ACHN (cell line): ENCODE measurements at regions of chr7 and their contacts with region 1.

Region 1: DNA sequence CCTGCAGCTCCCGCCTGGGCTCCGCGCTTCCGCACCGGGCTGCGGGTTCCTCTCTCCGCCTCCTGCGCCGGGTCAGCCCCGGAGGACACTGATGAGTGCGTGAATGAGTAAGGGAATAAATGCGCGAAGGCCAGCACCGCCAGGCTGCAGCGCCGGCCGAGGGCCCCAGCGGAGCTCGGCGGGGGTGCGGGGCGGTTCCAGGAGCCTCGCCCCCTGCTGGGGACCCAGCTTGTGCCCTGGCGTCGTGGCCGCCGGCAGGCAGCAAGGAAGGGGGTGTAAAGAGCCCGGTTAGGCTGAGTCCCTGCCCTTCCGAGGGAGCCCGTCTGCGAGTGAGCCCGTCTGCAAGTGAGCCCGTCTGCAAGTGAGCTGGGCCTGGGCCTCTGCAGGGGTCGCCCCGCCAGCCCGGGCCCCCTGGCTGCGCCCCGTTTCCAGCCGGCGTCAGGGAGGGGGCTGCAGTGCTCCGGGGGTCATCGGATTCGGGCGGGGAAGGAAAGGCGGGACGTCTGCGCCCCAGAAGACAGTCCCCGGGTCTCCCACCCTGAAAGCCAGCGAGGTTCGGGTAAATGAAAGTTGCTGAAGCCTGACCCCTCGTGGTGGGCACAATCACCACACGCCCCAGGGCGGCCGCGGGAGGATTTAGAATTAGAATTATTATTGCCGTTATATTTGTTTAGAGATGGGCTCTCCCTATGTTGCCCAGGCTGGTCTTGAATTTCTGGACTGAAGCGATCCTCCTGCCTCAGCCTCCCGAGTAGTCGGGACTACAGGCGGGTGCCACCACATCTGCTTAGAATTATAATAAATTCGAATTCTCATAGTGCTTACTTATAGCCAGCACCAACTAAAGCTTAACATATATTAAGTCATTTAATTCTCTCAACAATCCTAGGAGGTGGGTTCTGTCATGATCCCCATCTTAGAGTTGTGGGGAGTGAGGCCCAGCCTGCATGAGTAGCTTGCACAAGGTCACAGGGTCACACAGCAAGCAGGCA is 8.6 kb upstream of the CRYGN start:
- DNase-seq: peak; percentile 75

Region 2: GRCh38 chr7:151080522-151081169 is 367.9 kb before region 1 on chr7 and contains the start of gene FASTK:
- in situ Hi-C with region 1: no loop called
- DNase-seq: peak; percentile 96

Region 3: GRCh38 chr7:151368136-151368571 is 80.4 kb before region 1 on chr7:
- in situ Hi-C with region 1: loop called (anchors 10 kb)
- DNase-seq: peak; percentile 84

Region 4: GRCh38 chr7:151833691-151834090 is 385.1 kb after region 1 on chr7:
- in situ Hi-C with region 1: no loop called
- DNase-seq: peak; percentile 22